ENCODE measurements at regions of chr16 and their contacts with region 1.

Region 1: GRCh38 chr16:51408357-51408756 is 257.3 kb upstream of the SALL1 start:
- DNase-seq: no peak
- H3K4me3 ChIP-seq: no peak overlapping the region
- H3K27ac ChIP-seq: no peak overlapping the region
- H3K4me1 ChIP-seq: 0 out of 2 replicates have a peak, but pooled peaks cover 6% of the 10 kb centered on the region
- H3K27me3 ChIP-seq: no peaks in the 10 kb centered on the region; the same call in 1 of the 2 replicates
- CTCF ChIP-seq: no peak

Region 2: DNA sequence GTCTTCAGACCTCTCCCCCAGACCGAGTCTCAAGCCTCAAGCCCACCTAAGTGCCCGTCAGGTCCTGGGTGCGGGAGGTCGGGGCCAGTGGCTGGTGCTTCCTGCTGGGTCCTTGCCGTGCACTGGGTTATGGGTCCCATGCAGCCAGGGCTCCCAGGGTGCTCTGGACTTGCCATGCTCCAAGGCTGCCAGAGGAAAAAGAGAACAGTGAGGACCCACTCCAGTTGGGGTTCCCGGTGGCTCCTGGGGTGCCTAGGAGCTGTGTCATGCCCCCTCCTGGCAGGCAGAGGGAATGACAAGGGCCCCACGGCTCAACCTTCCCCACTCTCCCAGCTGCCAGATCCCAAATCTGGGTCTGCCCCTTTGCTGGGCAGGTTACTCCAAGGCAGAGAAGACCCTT is 731.0 kb before region 1 on chr16:
- CTCF ChIA-PET with region 1: no interaction called
- POLR2A ChIA-PET with region 1: interaction called, 16 read pairs
- intact Hi-C with region 1: no loop called
- DNase-seq: no peak
- H3K4me3 ChIP-seq: no peak overlapping the region
- H3K27ac ChIP-seq: no peak overlapping the region
- H3K4me1 ChIP-seq: peaks cover 13% of the 10 kb centered on the region
- H3K27me3 ChIP-seq: no peaks in the 10 kb centered on the region
- CTCF ChIP-seq: peak; percentile 55